CD4-positive, alpha-beta memory T cell (primary cell): ENCODE measurements at regions of chr14 and their contacts with region 1.

Region 1: GRCh38 chr14:91350813-91351511 is 66.7 kb downstream of the CCDC88C start:
- DNase-seq: peak; percentile 73 to 89 (median 76)
- H3K4me3 ChIP-seq: peak overlapping the region; percentile 39 to 68
- H3K4me3 Mint-ChIP-seq: peak overlapping the region; percentile 83 to 94 (median 91)
- H3K27ac ChIP-seq: peak overlapping the region; percentile 88
- H3K27ac Mint-ChIP-seq: peak overlapping the region; percentile 93 to 99 (median 96)
- H3K4me1 ChIP-seq: peaks cover 91% of the 10 kb centered on the region
- H3K4me1 Mint-ChIP-seq: peaks cover 71 to 95% (median 87%) of the 10 kb centered on the region in 4 donors
- H3K27me3 ChIP-seq: no peaks in the 10 kb centered on the region
- H3K27me3 Mint-ChIP-seq: no peaks in the 10 kb centered on the region

Region 2: GRCh38 chr14:91317381-91318308 is 33.3 kb before region 1 on chr14:
- CTCF ChIA-PET with region 1: interaction called, 32 read pairs
- POLR2A ChIA-PET with region 1: interaction called, 55 read pairs
- intact Hi-C with region 1: no loop called
- DNase-seq: peak; percentile 84 to 87 (median 85)
- H3K4me3 ChIP-seq: peak overlapping the region; percentile 17 to 29
- H3K4me3 Mint-ChIP-seq: peak overlapping the region; percentile 76 to 90 (median 84)
- H3K27ac ChIP-seq: peak overlapping the region; percentile 75
- H3K27ac Mint-ChIP-seq: peak overlapping the region; percentile 98 to 100 (median 99)
- H3K4me1 ChIP-seq: peaks cover 98% of the 10 kb centered on the region
- H3K4me1 Mint-ChIP-seq: peaks cover 45 to 88% (median 68%) of the 10 kb centered on the region in 4 donors
- H3K27me3 ChIP-seq: no peaks in the 10 kb centered on the region
- H3K27me3 Mint-ChIP-seq: no peaks in the 10 kb centered on the region

Region 3: DNA sequence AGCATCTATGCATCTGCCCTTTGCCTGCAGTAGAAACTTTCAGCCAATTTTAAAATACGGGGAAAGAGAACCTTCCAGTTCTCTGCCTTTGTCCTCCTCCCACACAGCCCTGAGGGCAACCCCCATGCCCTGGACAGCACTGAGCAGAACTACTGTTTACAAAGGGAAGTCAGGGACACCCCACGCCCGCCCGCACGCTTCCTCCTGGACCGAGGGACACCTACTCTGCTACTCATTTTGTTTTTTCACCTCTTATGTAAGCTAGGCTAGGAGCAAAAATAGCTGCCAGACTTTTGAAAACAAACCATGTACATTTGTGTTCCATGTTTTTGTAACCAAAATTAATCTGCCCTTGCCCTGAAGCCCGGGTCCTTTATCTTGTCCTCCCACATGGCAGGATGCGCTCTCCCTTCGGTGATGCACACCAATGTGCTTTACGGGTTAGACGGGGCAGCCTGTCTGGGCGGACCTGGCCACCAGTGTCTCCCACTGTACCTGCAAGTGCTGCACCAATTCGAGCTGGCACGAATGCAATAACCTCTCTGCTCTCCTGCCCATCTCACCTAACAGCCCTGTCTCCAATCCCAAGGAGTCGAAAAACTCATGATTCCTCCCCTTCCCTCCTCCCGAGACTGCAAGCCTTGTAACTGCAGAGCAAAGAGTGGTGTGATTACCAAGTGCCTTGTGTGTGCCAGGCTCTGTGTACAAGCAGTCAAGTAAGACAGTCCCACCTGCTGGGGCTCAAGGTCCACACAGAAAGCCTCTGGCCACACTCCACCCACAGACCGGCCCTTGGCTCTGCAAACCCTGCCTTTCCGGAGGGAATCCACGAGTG is 18.6 kb before region 1 on chr14:
- CTCF ChIA-PET with region 1: interaction called, 4 read pairs
- POLR2A ChIA-PET with region 1: interaction called, 29 read pairs
- intact Hi-C with region 1: loop called (anchors 2 kb)
- DNase-seq: no peak
- H3K4me3 ChIP-seq: no peak overlapping the region
- H3K4me3 Mint-ChIP-seq: peak overlapping the region in 6 of 8 donors; percentile 34 to 81 (median 58)
- H3K27ac ChIP-seq: peak overlapping the region; percentile 45
- H3K27ac Mint-ChIP-seq: peak overlapping the region; percentile 89 to 98 (median 95)
- H3K4me1 ChIP-seq: peaks cover 56% of the 10 kb centered on the region
- H3K4me1 Mint-ChIP-seq: peaks cover 39 to 78% (median 65%) of the 10 kb centered on the region in 4 donors
- H3K27me3 ChIP-seq: no peaks in the 10 kb centered on the region
- H3K27me3 Mint-ChIP-seq: no peaks in the 10 kb centered on the region

Region 4: GRCh38 chr14:91367173-91368171 is 16.5 kb after region 1 on chr14:
- CTCF ChIA-PET with region 1: interaction called, 17 read pairs
- POLR2A ChIA-PET with region 1: interaction called, 182 read pairs
- intact Hi-C with region 1: loop called (anchors 2 kb)
- DNase-seq: peak; percentile 68 to 97 (median 75)
- H3K4me3 ChIP-seq: peak overlapping the region; percentile 8 to 50
- H3K4me3 Mint-ChIP-seq: peak overlapping the region; percentile 58 to 89 (median 82)
- H3K27ac ChIP-seq: peak overlapping the region; percentile 85
- H3K27ac Mint-ChIP-seq: peak overlapping the region; percentile 94 to 99 (median 97)
- H3K4me1 ChIP-seq: peaks cover 98% of the 10 kb centered on the region
- H3K4me1 Mint-ChIP-seq: peaks cover 63 to 93% (median 76%) of the 10 kb centered on the region in 4 donors
- H3K27me3 ChIP-seq: no peaks in the 10 kb centered on the region
- H3K27me3 Mint-ChIP-seq: no peaks in the 10 kb centered on the region

Region 5: GRCh38 chr14:91388551-91388975 is 37.6 kb after region 1 on chr14:
- CTCF ChIA-PET with region 1: interaction called, 4 read pairs
- POLR2A ChIA-PET with region 1: interaction called, 13 read pairs
- intact Hi-C with region 1: no loop called
- DNase-seq: peak in 4 of 5 donors; percentile 40 to 75 (median 48)
- H3K4me3 ChIP-seq: peak overlapping the region in 1 of 2 donors; percentile 24
- H3K4me3 Mint-ChIP-seq: peak overlapping the region; percentile 53 to 79 (median 73)
- H3K27ac ChIP-seq: peak overlapping the region; percentile 56
- H3K27ac Mint-ChIP-seq: peak overlapping the region; percentile 83 to 96 (median 92)
- H3K4me1 ChIP-seq: peaks cover 100% of the 10 kb centered on the region
- H3K4me1 Mint-ChIP-seq: peaks cover 68 to 97% (median 86%) of the 10 kb centered on the region in 4 donors
- H3K27me3 ChIP-seq: no peaks in the 10 kb centered on the region
- H3K27me3 Mint-ChIP-seq: no peaks in the 10 kb centered on the region

Region 6: DNA sequence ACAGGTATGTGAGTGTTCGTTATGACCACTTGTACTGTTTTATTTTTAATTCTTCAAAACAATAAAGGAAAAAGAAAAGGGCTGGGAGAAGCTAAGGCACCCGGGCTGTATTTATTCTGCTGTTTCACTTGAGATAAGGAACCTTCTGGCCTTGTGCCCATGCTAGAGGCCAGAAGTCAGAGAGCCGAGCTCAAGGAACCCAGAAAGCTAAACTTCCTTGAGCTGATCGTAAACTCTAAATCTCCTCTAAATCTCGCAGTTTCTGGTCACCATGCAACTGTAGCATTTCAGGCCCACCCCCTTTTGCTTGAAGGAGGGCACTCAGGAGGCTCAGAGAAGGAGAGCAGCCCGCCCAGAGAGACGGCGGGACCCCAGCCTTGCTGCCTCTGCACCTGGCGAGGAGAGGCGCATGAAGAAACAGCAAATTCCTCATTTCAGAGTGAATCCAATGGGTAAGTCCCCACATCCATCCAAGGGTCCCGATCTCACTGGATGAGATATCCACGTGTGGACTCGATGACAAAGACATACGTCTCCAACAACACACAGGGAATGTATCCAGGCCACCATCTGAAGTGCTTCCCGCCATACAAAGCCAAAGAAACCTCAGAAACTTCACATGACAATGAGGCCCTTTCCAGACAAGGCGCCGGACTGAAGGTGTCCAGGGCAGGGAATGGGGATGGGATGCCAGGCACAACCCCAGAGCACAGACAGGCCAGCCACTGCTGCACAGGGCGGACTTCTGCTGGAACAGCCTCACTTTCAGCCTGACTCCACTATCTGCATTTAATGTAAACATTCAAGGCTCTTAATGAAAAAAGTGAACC is 52.0 kb after region 1 on chr14:
- CTCF ChIA-PET with region 1: interaction called, 34 read pairs
- POLR2A ChIA-PET with region 1: interaction called, 41 read pairs
- intact Hi-C with region 1: loop called (anchors 5 kb)
- DNase-seq: peak in 1 of 5 donors; percentile 38
- H3K4me3 ChIP-seq: peak overlapping the region in 1 of 2 donors; percentile 5
- H3K4me3 Mint-ChIP-seq: peak overlapping the region; percentile 54 to 82 (median 79)
- H3K27ac ChIP-seq: peak overlapping the region; percentile 94
- H3K27ac Mint-ChIP-seq: peak overlapping the region; percentile 94 to 99 (median 95)
- H3K4me1 ChIP-seq: peaks cover 97% of the 10 kb centered on the region
- H3K4me1 Mint-ChIP-seq: peaks cover 62 to 97% (median 84%) of the 10 kb centered on the region in 4 donors
- H3K27me3 ChIP-seq: no peaks in the 10 kb centered on the region
- H3K27me3 Mint-ChIP-seq: no peaks in the 10 kb centered on the region

Region 7: DNA sequence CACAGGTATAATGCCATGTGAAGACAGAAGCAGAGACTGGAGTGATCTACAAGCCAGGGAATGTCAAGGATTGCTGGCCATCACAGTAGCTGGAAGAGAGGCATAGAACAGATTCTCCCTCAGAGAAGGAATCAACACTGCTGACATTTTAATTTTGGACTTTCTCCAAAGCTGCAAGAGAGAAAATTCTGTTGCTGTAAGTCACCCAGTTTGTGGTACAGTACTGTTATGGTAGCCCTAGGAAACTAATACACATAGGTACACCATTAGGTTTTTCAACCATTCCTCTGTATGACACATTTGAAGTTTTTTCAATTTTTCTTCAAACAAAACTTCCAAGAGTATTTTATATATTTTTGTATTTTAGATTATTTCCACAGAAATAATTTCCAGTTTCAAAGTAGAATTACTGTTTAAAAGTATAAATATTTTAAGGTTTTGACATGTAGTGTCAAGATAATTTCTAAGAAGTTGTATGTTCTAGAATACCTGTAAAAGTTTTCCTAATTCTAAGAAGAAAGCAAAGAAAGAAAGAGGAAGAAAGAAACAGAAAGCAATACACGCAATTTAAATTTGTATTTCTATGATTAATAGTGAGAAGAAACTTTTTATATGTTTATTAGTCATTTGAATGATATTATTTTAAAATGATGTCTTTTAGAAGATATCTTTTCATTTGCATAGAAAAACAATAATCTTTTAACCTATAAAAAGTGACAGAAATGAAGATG is 445.8 kb after region 1 on chr14:
- CTCF ChIA-PET with region 1: no interaction called
- POLR2A ChIA-PET with region 1: no interaction called
- intact Hi-C with region 1: no loop called
- DNase-seq: no peak
- H3K4me3 ChIP-seq: no peak overlapping the region
- H3K4me3 Mint-ChIP-seq: no peak overlapping the region
- H3K27ac ChIP-seq: no peak overlapping the region
- H3K27ac Mint-ChIP-seq: peak overlapping the region; percentile 8 to 89 (median 48)
- H3K4me1 ChIP-seq: peaks cover 9% of the 10 kb centered on the region
- H3K4me1 Mint-ChIP-seq: peaks cover 13 to 36% (median 23%) of the 10 kb centered on the region in 4 donors
- H3K27me3 ChIP-seq: no peaks in the 10 kb centered on the region
- H3K27me3 Mint-ChIP-seq: no peaks in the 10 kb centered on the region